Heart left ventricle (tissue), 16 donors: ENCODE measurements at regions of chr10 and their contacts with region 1.

Region 1: GRCh38 chr10:70363971-70364771 is 18.3 kb downstream of the LRRC20 start:
- DNase-seq: peak; percentile 88 to 94 (median 92)
- ATAC-seq: peak; percentile 93 to 99 (median 98)
- H3K4me3 ChIP-seq: peak overlapping the region in 3 of 12 donors; percentile 4 to 14 (median 5)
- H3K27ac ChIP-seq: peak overlapping the region; percentile 39 to 84 (median 76)
- H3K4me1 ChIP-seq: peaks cover 0 to 18% (median 15%) of the 10 kb centered on the region in 12 donors
- H3K27me3 ChIP-seq: no peaks in the 10 kb centered on the region
- CTCF ChIP-seq: peak; percentile 84 to 98 (median 92)
- POLR2A ChIP-seq: no peak

Region 2: DNA sequence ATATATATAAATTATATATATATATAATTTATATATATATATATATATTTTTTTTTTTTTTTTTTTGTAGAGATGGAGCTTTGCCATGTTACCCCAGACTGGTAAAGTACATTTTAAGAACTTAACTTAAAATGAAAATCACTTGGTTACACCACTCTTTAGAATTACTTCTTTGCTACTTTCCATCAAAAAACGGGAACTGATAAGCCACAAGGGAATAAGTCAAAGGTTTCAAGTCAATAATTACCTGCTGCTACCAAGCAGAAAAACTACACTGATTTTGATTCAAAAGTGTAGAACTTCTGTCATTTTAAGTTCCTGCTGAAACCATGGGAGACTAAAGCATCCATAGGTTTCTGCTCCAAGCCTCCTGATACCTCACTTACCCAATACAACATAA is 143.1 kb before region 1 on chr10:
- intact Hi-C with region 1: loop called in 9 of 10 experiments (anchors 1 to 5 kb)
- DNase-seq: no peak
- ATAC-seq: no peak
- H3K4me3 ChIP-seq: peak overlapping the region in 1 of 12 donors; percentile 35
- H3K27ac ChIP-seq: peak overlapping the region in 4 of 12 donors; percentile 20 to 40 (median 32)
- H3K4me1 ChIP-seq: peaks cover 0 to 20% (median 4%) of the 10 kb centered on the region in 12 donors
- H3K27me3 ChIP-seq: no peaks in the 10 kb centered on the region
- CTCF ChIP-seq: no peak
- POLR2A ChIP-seq: no peak

Region 3: DNA sequence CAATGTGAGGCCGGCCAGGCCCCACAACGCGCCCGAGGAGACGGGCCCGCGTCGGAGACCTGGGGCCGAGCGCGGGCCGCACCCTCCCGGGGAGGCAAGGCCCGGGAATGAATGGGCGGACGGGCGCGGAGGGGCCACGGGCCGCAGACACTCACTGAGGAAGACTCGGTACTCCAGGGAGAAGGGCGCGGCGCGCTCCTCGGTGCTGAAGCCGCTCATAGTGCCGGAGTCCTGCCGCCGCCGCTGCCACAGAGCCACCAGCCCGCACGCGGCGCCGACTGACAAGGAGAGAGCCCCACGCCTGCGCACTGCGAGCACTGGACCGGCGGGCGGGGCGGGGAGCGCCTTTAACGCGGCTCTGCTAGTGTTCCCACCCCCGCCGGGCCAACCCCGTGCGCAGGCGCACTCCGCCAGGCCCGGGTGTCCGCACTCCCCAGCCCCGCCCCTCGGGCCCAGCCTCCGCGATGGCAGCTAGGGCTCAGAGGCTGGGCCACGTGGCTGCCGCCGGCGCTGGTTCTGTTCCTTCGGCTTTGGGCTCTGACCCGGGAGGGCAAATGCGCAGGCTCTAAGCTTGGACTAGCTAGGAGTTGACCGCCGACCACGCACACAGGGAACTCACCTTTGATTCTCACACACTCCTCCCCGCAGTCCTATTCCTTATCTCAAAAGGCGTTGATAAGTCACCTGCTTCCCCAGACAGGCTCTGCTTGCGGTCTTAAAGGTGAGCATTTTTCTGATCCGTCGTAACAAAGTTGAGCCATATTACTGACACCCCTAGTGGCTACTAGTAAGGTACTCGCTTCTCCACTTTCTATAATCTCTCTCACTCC is 130.8 kb before region 1 on chr10 and contains the start of gene PPA1:
- intact Hi-C with region 1: loop called in 1 of 10 experiments (anchors 5 kb)
- DNase-seq: peak; percentile 99 to 100 (median 99)
- ATAC-seq: peak; percentile 99 to 100 (median 99)
- H3K4me3 ChIP-seq: peak within 1 kb of the TSS; percentile 65 to 94 (median 83)
- H3K27ac ChIP-seq: peak within 1 kb of the TSS; percentile 25 to 89 (median 78)
- H3K4me1 ChIP-seq: peaks cover 0 to 42% (median 12%) of the 10 kb centered on the region in 12 donors
- H3K27me3 ChIP-seq: no peaks in the 10 kb centered on the region
- CTCF ChIP-seq: peak in 5 of 12 donors; percentile 2 to 23 (median 7)
- POLR2A ChIP-seq: peak in 1 of 2 donors; percentile 94
- total RNA-seq, gene PPA1: 61.1 to 151 (median 81.0) TPM

Region 4: DNA sequence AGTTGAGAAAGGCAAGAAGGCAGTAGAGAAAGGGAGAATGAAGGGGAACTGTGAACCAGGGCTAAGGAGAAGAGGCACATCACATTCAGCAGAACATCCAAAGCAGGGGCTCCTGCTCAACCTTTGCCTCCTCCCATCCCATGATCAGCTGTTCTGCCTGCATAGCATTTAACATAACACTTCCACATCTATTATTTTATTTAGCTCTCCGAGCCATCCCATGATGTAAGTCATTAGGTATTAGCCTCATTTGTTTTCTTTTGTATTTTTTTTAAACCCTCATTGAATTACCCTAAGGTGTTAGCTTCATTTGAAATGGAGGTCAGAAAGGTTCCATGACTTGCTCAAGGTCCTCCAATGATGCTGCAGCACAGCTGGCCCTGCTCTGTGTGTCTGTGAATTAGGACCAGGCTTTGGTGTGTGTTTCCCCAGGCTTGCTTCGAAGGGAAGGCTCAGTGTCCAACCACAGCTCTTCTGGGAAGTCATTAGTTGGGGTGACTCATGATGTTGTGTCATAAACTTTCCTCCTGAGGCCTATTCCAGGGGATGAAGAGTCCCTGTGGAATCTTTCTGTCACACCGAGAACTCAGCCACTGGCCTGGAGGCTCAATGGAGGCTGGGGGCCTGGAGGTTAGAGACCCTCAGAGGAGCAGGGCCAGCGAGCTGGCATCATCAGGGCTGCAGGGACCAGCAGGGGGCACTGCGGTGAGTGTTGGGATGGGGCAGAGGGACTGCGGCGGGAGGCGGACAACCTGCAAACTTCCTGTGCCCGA is 96.8 kb before region 1 on chr10:
- intact Hi-C with region 1: loop called in 6 of 10 experiments (anchors 2 to 5 kb)
- DNase-seq: no peak
- ATAC-seq: peak in 3 of 4 donors; percentile 8 to 78 (median 50)
- H3K4me3 ChIP-seq: no peak overlapping the region
- H3K27ac ChIP-seq: no peak overlapping the region
- H3K4me1 ChIP-seq: peaks cover 0 to 14% (median 0%) of the 10 kb centered on the region in 12 donors
- H3K27me3 ChIP-seq: peaks cover 0 to 9% (median 0%) of the 10 kb centered on the region in 9 donors
- CTCF ChIP-seq: peak in 7 of 12 donors; percentile 7 to 36 (median 18)
- POLR2A ChIP-seq: no peak

Region 5: DNA sequence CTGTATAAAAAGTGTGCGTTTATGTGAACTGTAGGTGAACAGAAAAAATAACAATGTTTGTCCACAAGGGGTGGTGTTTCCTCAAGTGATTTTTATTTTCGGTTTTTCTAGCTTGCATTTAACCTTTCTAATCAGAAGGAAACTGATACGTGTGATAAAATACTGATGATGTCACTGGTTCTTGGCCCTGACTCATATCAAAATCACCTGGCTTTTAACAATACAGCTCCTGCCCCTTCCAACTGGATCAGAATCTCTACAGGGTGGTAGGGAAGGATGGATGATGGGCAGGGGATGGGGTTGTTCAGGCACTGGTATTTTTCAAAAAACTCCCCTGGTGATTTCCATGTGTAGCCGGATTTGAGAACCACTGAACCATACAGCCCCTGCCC is 91.2 kb before region 1 on chr10:
- intact Hi-C with region 1: loop called in 7 of 10 experiments (anchors 2 to 5 kb)
- DNase-seq: no peak
- ATAC-seq: peak in 2 of 4 donors; percentile 16 to 45
- H3K4me3 ChIP-seq: no peak overlapping the region
- H3K27ac ChIP-seq: no peak overlapping the region
- H3K4me1 ChIP-seq: peaks cover 0 to 16% (median 5%) of the 10 kb centered on the region in 12 donors
- H3K27me3 ChIP-seq: no peaks in the 10 kb centered on the region
- CTCF ChIP-seq: peak; percentile 29 to 64 (median 54)
- POLR2A ChIP-seq: no peak

Region 6: GRCh38 chr10:70283445-70284399 is 80.4 kb before region 1 on chr10 and contains the start of gene NPFFR1:
- intact Hi-C with region 1: loop called in 2 of 10 experiments (anchors 5 kb)
- DNase-seq: no peak
- ATAC-seq: peak in 3 of 4 donors; percentile 41 to 70 (median 53)
- H3K4me3 ChIP-seq: peak within 1 kb of the TSS in 11 of 12 donors; percentile 14 to 49 (median 39)
- H3K27ac ChIP-seq: no peak within 1 kb of the TSS
- H3K4me1 ChIP-seq: peaks cover 0 to 25% (median 6%) of the 10 kb centered on the region in 12 donors
- H3K27me3 ChIP-seq: peaks cover 5 to 46% (median 32%) of the 10 kb centered on the region in 9 donors
- CTCF ChIP-seq: peak in 4 of 12 donors; percentile 16 to 32 (median 22)
- POLR2A ChIP-seq: no peak
- total RNA-seq, gene NPFFR1: 0.52 TPM in 1 of 9 donors, not detected in the others

Region 7: GRCh38 chr10:70312972-70313371 is 51.2 kb before region 1 on chr10:
- intact Hi-C with region 1: no loop called
- DNase-seq: peak in 1 of 5 donors; percentile 44
- ATAC-seq: peak in 3 of 4 donors; percentile 65 to 77 (median 66)
- H3K4me3 ChIP-seq: no peak overlapping the region
- H3K27ac ChIP-seq: no peak overlapping the region
- H3K4me1 ChIP-seq: peaks cover 0 to 10% (median 0%) of the 10 kb centered on the region in 12 donors
- H3K27me3 ChIP-seq: peaks cover 0 to 25% (median 0%) of the 10 kb centered on the region in 9 donors
- CTCF ChIP-seq: no peak
- POLR2A ChIP-seq: no peak